Left colon (tissue), 2 donors: ENCODE measurements at regions of chr9 and their contacts with region 1.

Region 1: DNA sequence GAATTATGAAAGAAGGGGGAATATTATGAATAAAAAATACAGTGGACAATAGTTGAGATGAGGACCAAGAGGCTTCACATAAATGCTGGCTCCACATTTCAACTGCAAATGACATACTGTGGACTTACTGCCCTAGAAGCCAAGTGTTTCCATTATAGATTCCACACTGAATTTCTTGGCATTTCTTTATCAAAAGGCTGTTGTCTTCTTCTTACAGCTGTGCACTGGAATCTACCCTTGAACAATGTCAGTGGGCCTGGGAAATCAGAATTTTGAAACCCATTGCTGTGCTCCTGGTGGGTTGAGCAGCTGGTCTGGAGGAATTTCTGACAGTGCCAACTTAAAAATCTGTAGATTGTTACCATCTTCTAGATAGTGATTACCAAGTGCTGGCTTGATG is 49.9 kb downstream of the TNC start:
- DNase-seq: no peak
- ATAC-seq: no peak

Region 2: DNA sequence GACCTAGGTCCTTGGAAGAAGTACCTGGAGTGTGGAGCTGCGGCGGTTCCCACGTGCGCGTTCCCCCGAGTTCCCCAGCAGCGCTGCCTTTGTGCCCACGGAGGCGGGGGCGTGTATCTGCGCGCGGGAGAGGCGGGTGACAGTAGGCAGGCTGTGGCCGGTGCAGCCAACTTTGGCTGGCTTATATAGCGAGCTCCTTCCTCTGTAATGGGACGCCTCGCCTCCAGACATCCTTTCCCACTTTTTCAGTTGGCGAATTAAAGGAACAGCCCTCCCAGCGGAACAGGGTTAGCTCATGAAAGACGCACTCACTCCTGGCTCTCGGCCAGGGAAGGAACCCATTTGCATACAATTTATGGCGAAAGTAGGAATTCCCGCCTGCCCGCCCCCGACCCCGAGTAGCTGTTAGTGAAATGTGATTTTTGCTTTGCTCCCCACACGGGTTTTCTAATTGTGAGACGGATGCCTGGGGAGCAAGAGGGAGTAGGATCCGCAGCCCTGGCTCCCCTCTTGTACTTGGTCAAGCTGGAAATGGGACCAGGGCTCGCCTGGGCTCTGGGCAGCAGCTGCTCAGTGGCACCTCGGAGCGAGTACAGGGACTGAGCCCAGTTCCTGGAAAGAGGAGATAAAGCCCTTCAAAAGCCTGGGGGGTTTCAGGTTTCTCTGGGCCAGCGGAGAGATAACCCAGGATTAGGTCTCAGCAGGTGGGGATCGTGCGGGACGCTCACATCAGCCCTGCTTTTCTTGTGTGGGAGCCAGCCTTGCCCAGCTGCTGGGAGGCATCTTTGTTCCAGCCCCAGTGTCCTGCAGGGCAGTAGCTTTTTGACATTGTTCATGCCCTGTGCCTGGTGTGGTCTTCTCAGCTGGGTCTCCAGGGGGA is 50.2 kb after region 1 on chr9 and contains the start of gene TNC:
- intact Hi-C with region 1: loop called in 1 of 2 experiments (anchors 5 kb)
- DNase-seq: peak; percentile 44 to 69
- ATAC-seq: peak; percentile 34
- total RNA-seq, gene TNC: 3.0 to 43.8 TPM